Heart right ventricle (tissue), 16 donors: ENCODE measurements at regions of chr2 and their contacts with region 1.

Region 1: DNA sequence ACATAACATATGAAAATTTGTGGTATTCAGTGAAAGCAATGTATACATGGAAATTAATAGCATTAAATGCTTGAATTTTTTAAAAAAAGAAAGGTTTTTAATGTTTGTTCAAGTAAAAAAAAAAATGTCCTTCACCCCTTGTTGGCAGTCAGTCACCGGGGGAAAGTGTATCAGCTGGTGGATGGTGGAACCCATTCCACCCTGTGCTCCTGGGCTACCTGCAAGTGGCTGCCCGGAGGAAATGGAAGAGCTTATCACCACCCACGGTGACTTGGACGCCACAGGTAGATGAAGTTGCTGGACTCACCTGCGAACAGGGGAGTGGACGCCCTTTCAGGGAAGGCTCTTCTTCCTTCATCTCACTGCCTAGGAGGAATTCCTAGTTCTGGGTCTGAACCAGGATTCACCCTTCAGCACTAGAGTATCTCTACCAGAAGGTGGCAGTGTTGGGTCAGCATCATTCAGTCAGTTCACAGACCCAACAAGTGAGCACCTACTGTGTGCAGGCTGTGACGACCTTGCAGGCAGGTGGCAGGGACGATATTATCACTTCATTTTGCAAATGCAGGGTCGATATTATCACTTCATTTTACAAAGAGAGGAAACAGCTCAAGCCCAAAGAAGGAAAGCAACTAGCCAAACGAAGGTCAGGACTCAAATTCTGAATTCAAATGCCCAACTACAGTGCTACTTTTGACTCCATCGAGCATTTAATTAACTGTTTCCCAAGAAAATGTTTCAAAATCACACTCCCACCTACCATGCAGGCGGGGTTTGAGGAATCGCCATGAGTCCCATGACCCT is 35.8 kb downstream of the CIB4 start:
- DNase-seq: no peak
- ATAC-seq: peak in 6 of 8 donors; percentile 50 to 75 (median 62)
- H3K4me3 ChIP-seq: no peak overlapping the region
- H3K27ac ChIP-seq: no peak overlapping the region
- H3K4me1 ChIP-seq: no peaks in the 10 kb centered on the region
- H3K27me3 ChIP-seq: peaks cover 0 to 61% (median 38%) of the 10 kb centered on the region in 7 donors
- CTCF ChIP-seq: peak; percentile 54 to 89 (median 80)

Region 2: GRCh38 chr2:26745609-26746327 is 140.4 kb after region 1 on chr2:
- intact Hi-C with region 1: loop called (anchors 1 to 2 kb)
- DNase-seq: peak; percentile 82 to 85
- ATAC-seq: peak; percentile 78 to 93 (median 92)
- H3K4me3 ChIP-seq: no peak overlapping the region
- H3K27ac ChIP-seq: no peak overlapping the region
- H3K4me1 ChIP-seq: no peaks in the 10 kb centered on the region
- H3K27me3 ChIP-seq: no peaks in the 10 kb centered on the region
- CTCF ChIP-seq: peak; percentile 85 to 98 (median 95)